Cardiac septum (tissue), 1 donor: ENCODE measurements at regions of chr2 and their contacts with region 1.

Region 1: DNA sequence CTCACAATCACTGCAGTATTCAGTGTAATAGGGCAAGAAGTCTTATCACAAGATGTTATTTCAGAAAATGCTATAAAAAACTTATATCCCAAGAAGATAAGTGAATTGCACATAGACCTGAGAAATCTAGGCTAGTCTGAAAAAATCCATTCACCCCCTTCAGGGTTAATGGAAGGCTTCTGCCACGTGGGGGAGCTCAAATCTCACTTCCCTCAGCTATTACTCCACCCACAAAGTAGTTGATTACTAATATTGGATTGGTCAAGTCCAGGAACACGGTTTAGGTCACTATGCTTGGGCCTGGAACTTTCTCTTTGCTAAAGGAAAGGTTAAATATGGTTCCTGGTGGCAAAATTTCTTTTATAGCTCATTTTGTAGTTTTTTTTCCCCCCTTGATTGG is 51.2 kb upstream of the ADAM23 start:
- DNase-seq: no peak

Region 2: GRCh38 chr2:206095536-206096332 is 296.4 kb before region 1 on chr2:
- intact Hi-C with region 1: no loop called
- DNase-seq: no peak

Region 3: DNA sequence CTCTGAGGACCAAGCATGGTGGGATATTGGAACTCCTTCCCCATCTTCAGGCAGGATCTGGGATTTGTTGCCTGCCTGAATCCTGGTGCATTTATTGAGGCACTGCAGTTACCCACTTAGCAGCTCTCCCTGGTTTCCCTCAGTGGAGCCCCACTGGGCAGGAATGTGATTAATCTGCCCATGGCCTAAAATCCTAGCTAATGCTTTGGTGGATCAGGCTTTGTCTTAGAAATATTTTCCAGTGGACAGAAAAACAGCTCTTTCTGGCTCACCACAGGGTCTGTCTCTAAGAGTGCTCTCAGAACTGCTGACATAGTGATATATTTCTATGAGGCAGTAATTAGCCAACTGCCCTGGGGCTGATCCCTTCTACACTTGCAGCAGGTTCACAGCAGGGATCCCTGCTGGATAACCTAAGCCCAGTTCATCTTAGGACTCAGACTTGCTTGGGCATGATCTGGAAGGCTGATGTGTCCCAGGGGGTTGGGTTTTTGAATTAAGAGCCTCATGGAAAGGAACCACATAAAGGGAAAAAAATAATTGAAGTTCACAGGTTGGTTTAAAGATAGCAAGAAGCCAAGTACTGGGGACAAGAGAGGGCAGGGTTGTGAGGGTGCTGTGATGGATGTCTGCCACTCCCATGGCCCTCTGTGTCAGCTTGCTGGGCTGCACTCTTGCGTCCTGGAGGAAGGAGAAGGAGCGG is 161.9 kb before region 1 on chr2:
- intact Hi-C with region 1: no loop called
- DNase-seq: no peak

Region 4: GRCh38 chr2:206531996-206532543 is 140.0 kb after region 1 on chr2:
- intact Hi-C with region 1: loop called (anchors 10 kb)
- DNase-seq: no peak